Right ventricle myocardium superior (tissue), 1 donor: ENCODE measurements at regions of chr15 and their contacts with region 1.

Region 1: GRCh38 chr15:40421246-40422157 is 15.9 kb downstream of the IVD start:
- DNase-seq: peak; percentile 90
- ATAC-seq: peak; percentile 91

Region 2: DNA sequence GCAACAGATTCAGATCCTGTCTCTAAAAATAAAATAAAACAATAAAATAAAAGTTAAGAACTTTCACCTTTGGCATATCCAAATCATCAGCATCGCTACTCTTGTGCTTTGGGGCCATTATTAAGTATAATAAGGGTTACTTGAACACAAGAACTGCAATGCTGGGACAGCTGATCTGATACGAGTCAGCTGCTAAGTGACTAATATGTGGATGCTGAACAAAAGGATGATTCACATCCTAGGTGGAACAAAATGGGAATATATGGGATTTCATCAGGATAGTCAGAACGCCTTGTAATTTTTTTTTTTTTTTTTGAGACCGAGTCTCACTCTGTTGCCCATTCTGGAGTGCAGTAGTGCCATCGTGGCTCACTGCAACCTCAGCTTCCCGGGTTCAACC is 230.9 kb before region 1 on chr15:
- intact Hi-C with region 1: no loop called
- DNase-seq: no peak
- ATAC-seq: no peak

Region 3: GRCh38 chr15:40282144-40282868 is 139.2 kb before region 1 on chr15:
- intact Hi-C with region 1: loop called (anchors 2 kb)
- DNase-seq: peak; percentile 73
- ATAC-seq: peak; percentile 57

Region 4: GRCh38 chr15:40323239-40323952 is 98.1 kb before region 1 on chr15 and contains the start of gene INAFM2:
- intact Hi-C with region 1: loop called (anchors 5 kb)
- DNase-seq: peak; percentile 95
- ATAC-seq: peak; percentile 92
- total RNA-seq, gene INAFM2: 56.2 TPM

Region 5: GRCh38 chr15:40367686-40368611 is 53.6 kb before region 1 on chr15:
- intact Hi-C with region 1: loop called (anchors 5 kb)
- DNase-seq: peak; percentile 91
- ATAC-seq: peak; percentile 76

Region 6: GRCh38 chr15:40493089-40493840 is 71.8 kb after region 1 on chr15:
- intact Hi-C with region 1: no loop called
- DNase-seq: no peak
- ATAC-seq: no peak

Region 7: DNA sequence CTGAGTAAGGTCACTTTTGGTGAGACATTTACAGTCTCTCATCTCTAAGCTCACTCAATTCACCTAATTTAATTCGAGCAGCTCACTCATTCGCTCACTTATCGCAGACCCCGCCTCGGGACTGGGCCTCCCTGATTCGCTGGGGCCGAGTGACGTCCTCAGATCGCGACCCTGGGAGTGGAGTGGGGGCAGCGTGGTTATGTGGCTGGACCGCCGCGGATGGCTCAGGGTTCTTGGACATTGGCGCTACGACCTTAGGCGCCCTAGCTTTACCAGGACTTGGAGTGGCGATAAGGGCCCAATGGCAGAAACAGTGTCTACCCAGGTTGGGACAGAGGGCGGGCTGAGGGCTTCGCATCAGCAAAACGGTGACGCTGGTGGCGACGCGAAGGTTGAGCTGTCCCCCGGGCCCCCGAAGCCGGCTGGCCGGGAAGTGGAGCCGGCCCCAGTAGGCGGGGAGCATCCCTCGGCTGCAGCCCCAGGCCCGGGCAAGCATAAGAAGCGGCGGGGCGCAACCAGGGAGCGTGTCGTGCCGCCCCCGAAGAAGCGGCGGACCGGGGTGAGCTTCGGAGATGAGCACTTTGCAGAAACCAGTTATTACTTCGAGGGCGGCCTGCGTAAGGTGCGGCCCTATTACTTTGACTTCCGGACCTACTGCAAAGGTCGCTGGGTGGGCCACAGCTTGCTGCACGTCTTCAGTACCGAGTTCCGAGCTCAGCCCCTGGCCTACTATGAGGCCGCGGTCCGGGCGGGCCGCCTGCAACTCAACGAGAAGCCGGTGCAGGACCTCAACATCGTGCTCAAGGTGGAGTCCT is 147.8 kb after region 1 on chr15 and contains the start of gene RPUSD2:
- intact Hi-C with region 1: no loop called
- DNase-seq: peak; percentile 96
- ATAC-seq: peak; percentile 86
- total RNA-seq, gene RPUSD2: 10.1 TPM